ENCODE measurements at regions of chr9 and their contacts with region 1.

Region 1: GRCh38 chr9:117858561-117858960 is 154.4 kb downstream of the TLR4 start:
- DNase-seq: no peak
- ATAC-seq: no peak
- H3K4me3 ChIP-seq: no peak overlapping the region
- H3K27ac ChIP-seq: no peak overlapping the region
- H3K4me1 ChIP-seq: no peaks in the 10 kb centered on the region
- H3K27me3 ChIP-seq: no peaks in the 10 kb centered on the region
- CTCF ChIP-seq: no peak

Region 2: DNA sequence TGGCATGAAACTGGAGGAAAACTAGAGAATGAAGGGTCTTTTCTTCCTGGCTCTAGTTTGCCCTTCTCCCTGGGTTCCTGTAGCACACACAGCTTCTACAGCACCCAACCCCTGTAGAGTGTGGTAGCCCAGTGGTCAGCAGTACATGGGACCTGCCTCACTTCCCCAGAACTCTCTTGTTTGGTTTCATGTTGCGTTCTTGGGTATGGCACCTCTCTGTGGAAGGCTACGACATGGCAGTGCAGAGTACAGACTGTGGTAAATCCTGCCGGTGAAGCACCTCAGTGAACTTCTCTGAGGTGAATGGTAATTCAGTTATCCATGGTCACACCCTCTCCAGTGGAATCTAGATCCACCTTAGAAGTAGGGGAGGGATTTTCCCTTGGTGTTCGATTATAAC is 48.8 kb before region 1 on chr9:
- intact Hi-C with region 1: loop called in 1 of 10 experiments (anchors 10 kb)
- DNase-seq: no peak
- ATAC-seq: no peak
- H3K4me3 ChIP-seq: no peak overlapping the region
- H3K27ac ChIP-seq: no peak overlapping the region
- H3K4me1 ChIP-seq: no peaks in the 10 kb centered on the region
- H3K27me3 ChIP-seq: no peaks in the 10 kb centered on the region
- CTCF ChIP-seq: no peak